ENCODE measurements at regions of chr2 and their contacts with region 1.

Region 1: GRCh38 chr2:197839856-197840255 is 35.5 kb downstream of the PLCL1 start:
- DNase-seq: no peak
- ATAC-seq: no peak
- H3K4me3 ChIP-seq: no peak overlapping the region
- H3K4me1 ChIP-seq: no peaks in the 10 kb centered on the region
- CTCF ChIP-seq: no peak

Region 2: DNA sequence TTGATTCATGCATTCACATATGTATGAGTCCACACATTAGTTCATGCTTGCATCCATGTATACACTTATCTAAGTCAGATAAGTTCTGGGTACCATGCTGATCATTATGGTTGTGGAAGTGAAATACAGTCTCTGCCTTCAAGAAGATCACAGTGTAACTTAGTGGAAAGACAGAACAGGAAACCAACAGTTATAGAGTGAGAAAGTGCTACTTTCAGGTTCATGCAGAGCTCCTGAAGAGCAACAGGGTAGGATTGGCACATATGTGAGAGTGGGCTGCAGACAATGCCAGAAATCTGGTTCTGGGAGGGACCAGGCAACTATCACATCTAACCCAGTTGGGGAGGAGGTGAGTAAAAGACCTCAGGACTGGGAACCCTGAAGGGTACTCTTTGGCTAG is 878.0 kb before region 1 on chr2:
- intact Hi-C with region 1: loop called in 1 of 2 experiments (anchors 5 kb)
- DNase-seq: no peak
- ATAC-seq: no peak
- H3K4me3 ChIP-seq: no peak overlapping the region
- H3K4me1 ChIP-seq: peaks cover 2% of the 10 kb centered on the region
- CTCF ChIP-seq: no peak

Region 3: DNA sequence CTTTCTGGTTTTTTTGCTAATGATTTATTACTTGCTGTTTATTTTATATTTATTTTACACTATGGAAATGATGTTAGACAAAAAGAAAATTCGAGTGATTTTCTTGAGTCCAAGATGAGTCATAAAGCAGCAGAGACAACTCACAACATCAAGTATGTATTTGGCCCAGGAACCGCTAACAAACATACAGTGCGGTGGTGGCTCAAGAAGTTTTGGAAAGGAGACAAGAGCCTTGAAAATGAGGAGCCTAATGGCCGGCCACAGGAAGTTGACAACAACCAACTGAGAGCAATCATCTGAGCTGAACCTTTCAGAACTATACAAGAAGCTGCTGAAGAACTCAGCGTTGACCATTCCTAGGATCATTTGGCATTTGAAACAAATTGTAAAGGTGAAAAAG is 1023.8 kb after region 1 on chr2:
- intact Hi-C with region 1: no loop called
- DNase-seq: no peak
- ATAC-seq: no peak
- H3K4me3 ChIP-seq: no peak overlapping the region
- H3K4me1 ChIP-seq: no peaks in the 10 kb centered on the region
- CTCF ChIP-seq: no peak